ENCODE measurements at regions of chr15 and their contacts with region 1.

Region 1: DNA sequence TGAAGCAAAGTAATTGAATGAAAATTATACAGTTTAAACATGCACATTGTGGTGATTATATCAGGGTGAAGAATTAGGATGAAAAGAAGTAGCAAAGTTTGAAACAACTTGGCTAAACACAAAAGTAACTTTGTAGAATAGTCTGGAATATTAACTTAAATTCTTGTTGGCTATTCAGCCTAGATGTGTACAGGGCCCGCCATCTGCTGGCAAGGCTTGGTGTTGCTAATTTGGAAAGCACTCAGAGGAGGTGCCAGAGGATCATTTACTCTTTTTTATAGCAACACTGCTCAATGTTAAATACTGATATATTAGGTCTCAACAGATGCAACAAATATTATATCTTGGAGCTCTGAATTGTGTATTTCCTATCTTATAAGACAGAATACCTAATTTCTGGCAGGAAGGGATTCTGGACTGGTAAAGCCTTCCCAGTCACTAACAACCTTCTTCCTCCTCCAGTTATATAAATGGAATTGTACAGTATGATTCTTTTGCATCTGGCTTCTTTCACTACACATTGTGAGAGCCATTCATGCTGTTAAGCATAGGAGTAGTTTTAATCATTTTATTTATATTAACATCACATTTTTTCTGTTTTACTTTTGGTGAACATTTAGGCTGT is 36.1 kb downstream of the TTC23 start:
- DNase-seq: peak; percentile 47 to 69 (median 50)
- ATAC-seq: peak; percentile 95
- H3K4me3 ChIP-seq: no peak overlapping the region
- H3K27ac ChIP-seq: no peak overlapping the region
- H3K4me1 ChIP-seq: no peaks in the 10 kb centered on the region
- H3K27me3 ChIP-seq: no peaks in the 10 kb centered on the region
- CTCF ChIP-seq: peak; percentile 76 to 89 (median 87)
- EP300 ChIP-seq: no peak
- POLR2A ChIP-seq: no peak
- RAD21 ChIP-seq: peak; percentile 77 to 91

Region 2: GRCh38 chr15:99169769-99170311 is 43.5 kb before region 1 on chr15:
- CTCF ChIA-PET with region 1: no interaction called
- POLR2A ChIA-PET with region 1: no interaction called
- in situ Hi-C with region 1: no loop called
- intact Hi-C with region 1: loop called (anchors 5 kb)
- DNase-seq: no peak
- ATAC-seq: no peak
- H3K4me3 ChIP-seq: no peak overlapping the region
- H3K27ac ChIP-seq: no peak overlapping the region
- H3K4me1 ChIP-seq: peaks cover 0 to 2% of the 10 kb centered on the region in 2 experiments; a peak in 1 of 5 replicates
- H3K27me3 ChIP-seq: peaks cover 0 to 7% of the 10 kb centered on the region in 2 experiments; a peak in 1 of 5 replicates
- CTCF ChIP-seq: no peak
- EP300 ChIP-seq: no peak
- POLR2A ChIP-seq: no peak
- RAD21 ChIP-seq: no peak